Calu3 (cell line): ENCODE measurements at regions of chr17 and their contacts with region 1.

Region 1: GRCh38 chr17:39980351-39981206 is at the start of gene PSMD3:
- DNase-seq: peak; percentile 100
- H3K4me3 Mint-ChIP-seq: peak within 1 kb of the TSS; percentile 77
- H3K27ac Mint-ChIP-seq: peak within 1 kb of the TSS; percentile 81
- H3K4me1 Mint-ChIP-seq: peaks cover 26% of the 10 kb centered on the region
- H3K27me3 Mint-ChIP-seq: peaks cover 43% of the 10 kb centered on the region
- CTCF ChIP-seq: no peak
- total RNA-seq, gene PSMD3: 2,152 and 2,179 TPM in 2 replicates

Region 2: GRCh38 chr17:39704821-39705551 is 275.6 kb before region 1 on chr17:
- CTCF ChIA-PET with region 1: interaction called, 8,195 read pairs
- intact Hi-C with region 1: loop called (anchors 1 kb)
- DNase-seq: peak; percentile 99
- H3K4me3 Mint-ChIP-seq: peak overlapping the region; percentile 71
- H3K27ac Mint-ChIP-seq: peak overlapping the region; percentile 67
- H3K4me1 Mint-ChIP-seq: peaks cover 92% of the 10 kb centered on the region
- H3K27me3 Mint-ChIP-seq: no peaks in the 10 kb centered on the region
- CTCF ChIP-seq: no peak

Region 3: DNA sequence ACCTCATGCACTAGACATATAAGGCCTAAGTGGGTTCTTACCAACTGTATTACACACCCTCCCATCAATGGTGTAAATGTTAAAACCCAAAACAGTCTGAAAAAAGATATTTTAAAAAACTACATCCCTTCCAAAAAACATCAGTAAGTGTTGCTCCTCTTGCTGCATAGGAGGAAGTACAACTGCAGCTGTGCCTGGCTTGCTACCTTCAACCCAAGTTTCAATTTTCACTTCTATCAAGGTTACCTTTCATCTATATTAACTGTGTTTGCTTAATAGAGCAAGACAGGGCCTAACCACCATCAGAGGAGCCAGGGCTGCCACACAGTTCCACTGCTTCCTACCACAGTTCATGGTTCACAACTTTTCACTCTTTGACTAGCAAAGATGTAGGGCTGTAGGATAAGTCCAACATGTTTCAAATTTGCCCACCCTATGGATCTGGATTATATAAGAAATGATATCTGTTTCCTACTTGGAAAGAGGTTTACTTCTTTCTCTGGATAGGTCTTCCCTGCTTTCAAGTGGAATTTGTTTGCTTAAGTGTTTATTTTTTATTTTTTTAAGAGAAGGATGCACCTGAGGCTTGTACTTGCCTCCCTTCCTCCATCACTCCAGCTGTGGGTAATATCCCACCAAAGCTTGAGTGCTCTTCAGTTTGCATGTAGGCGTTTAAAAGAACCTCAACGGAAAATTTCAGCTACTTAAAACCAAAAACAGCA is 186.2 kb before region 1 on chr17:
- CTCF ChIA-PET with region 1: interaction called, 61 read pairs
- intact Hi-C with region 1: no loop called
- DNase-seq: peak; percentile 73
- H3K4me3 Mint-ChIP-seq: no peak overlapping the region
- H3K27ac Mint-ChIP-seq: no peak overlapping the region
- H3K4me1 Mint-ChIP-seq: no peaks in the 10 kb centered on the region
- H3K27me3 Mint-ChIP-seq: no peaks in the 10 kb centered on the region
- CTCF ChIP-seq: no peak

Region 4: GRCh38 chr17:39872751-39873150 is 107.8 kb before region 1 on chr17:
- CTCF ChIA-PET with region 1: interaction called, 68 read pairs
- intact Hi-C with region 1: loop called (anchors 1 kb)
- DNase-seq: peak; percentile 78
- H3K4me3 Mint-ChIP-seq: no peak overlapping the region
- H3K27ac Mint-ChIP-seq: no peak overlapping the region
- H3K4me1 Mint-ChIP-seq: no peaks in the 10 kb centered on the region
- H3K27me3 Mint-ChIP-seq: peaks cover 11% of the 10 kb centered on the region
- CTCF ChIP-seq: no peak

Region 5: GRCh38 chr17:40021451-40021971 is 40.9 kb after region 1 on chr17:
- CTCF ChIA-PET with region 1: interaction called, 1,657 read pairs
- intact Hi-C with region 1: no loop called
- DNase-seq: peak; percentile 88
- H3K4me3 Mint-ChIP-seq: no peak overlapping the region
- H3K27ac Mint-ChIP-seq: no peak overlapping the region
- H3K4me1 Mint-ChIP-seq: peaks cover 36% of the 10 kb centered on the region
- H3K27me3 Mint-ChIP-seq: peaks cover 23% of the 10 kb centered on the region
- CTCF ChIP-seq: no peak

Region 6: GRCh38 chr17:40153603-40154236 is 173.1 kb after region 1 on chr17:
- CTCF ChIA-PET with region 1: no interaction called
- intact Hi-C with region 1: no loop called
- DNase-seq: no peak
- H3K4me3 Mint-ChIP-seq: no peak overlapping the region
- H3K27ac Mint-ChIP-seq: no peak overlapping the region
- H3K4me1 Mint-ChIP-seq: no peaks in the 10 kb centered on the region
- H3K27me3 Mint-ChIP-seq: no peaks in the 10 kb centered on the region
- CTCF ChIP-seq: no peak

Region 7: DNA sequence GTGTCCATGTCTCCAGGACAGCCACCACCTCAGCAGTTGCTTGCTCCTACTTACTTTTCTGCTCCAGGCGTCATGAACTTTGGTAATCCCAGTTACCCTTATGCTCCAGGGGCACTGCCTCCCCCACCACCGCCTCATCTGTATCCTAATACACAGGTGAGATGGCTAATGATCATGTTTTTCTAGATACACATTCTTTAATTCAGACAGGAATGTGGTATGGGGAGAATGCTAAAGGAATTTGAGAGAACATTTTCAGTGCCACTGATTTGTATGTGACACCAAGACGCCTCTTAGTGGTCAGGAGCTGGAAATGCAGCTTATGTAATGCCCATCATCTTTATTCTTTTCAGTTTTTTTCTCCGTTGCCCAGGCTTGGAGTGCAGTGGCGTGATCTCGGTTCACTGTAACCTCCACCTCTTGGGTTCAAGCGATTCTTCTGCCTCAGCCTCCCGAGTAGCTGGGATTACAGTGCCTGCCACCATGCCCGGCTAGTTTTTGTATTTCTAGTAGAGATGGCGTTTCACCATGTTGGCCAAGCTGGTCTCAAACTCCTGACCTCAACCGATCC is 187.8 kb after region 1 on chr17:
- CTCF ChIA-PET with region 1: interaction called, 15 read pairs
- intact Hi-C with region 1: no loop called
- DNase-seq: peak; percentile 88
- H3K4me3 Mint-ChIP-seq: no peak overlapping the region
- H3K27ac Mint-ChIP-seq: peak overlapping the region; percentile 4
- H3K4me1 Mint-ChIP-seq: peaks cover 17% of the 10 kb centered on the region
- H3K27me3 Mint-ChIP-seq: no peaks in the 10 kb centered on the region
- CTCF ChIP-seq: no peak

Region 8: DNA sequence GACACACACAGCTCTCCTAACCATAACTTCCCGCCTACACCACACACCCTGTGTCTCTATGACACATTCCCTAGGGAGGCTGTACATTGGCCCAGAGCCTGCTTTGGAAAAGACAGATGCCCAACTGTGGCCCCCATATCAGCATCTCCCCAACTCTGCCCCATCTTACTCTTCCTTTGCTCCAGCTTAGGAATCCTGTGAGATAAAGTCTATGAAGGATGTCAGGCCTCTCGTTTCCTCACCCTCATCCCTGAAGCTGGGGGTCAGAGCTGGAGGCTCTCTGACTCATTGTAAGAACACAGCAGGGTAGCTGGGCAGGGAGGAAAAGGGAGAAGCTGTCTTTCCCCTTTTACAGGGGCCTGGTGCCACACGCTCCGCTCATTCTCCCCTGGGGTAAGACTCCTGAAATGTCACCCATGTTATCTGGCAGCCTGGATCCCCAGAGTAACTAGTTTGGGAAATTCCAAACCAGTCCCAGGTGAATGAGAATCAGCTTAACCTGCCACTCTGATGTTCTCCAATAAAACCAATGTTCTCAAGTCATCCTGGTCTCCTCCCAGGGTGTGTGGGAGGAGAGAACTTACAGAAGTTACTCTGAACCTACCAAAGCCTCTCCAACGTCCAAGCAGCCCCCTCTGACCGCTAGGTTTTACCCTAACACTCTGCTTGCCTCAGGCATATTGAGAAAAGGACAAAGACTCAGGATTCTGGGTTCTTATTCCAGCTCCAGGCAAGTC is 199.5 kb after region 1 on chr17:
- CTCF ChIA-PET with region 1: no interaction called
- intact Hi-C with region 1: no loop called
- DNase-seq: peak; percentile 79
- H3K4me3 Mint-ChIP-seq: peak overlapping the region; percentile 0
- H3K27ac Mint-ChIP-seq: peak overlapping the region; percentile 11
- H3K4me1 Mint-ChIP-seq: peaks cover 56% of the 10 kb centered on the region
- H3K27me3 Mint-ChIP-seq: no peaks in the 10 kb centered on the region
- CTCF ChIP-seq: no peak

Region 9: GRCh38 chr17:40559954-40560591 is 579.5 kb after region 1 on chr17:
- CTCF ChIA-PET with region 1: interaction called, 27 read pairs
- intact Hi-C with region 1: no loop called
- DNase-seq: peak; percentile 100
- H3K4me3 Mint-ChIP-seq: peak overlapping the region; percentile 47
- H3K27ac Mint-ChIP-seq: no peak overlapping the region
- H3K4me1 Mint-ChIP-seq: peaks cover 17% of the 10 kb centered on the region
- H3K27me3 Mint-ChIP-seq: peaks cover 99% of the 10 kb centered on the region
- CTCF ChIP-seq: no peak